PC-3 (cell line): ENCODE measurements at regions of chr14 and their contacts with region 1.

Region 1: GRCh38 chr14:21437063-21437901 is 18.6 kb downstream of the CHD8 start:
- DNase-seq: peak; percentile 99
- ATAC-seq: peak; percentile 99
- H3K4me3 ChIP-seq: peak overlapping the region; percentile 85
- H3K27ac ChIP-seq: peak overlapping the region; percentile 45
- H3K4me1 ChIP-seq: peaks cover 15% of the 10 kb centered on the region
- H3K27me3 ChIP-seq: no peaks in the 10 kb centered on the region
- CTCF ChIP-seq: no peak

Region 2: GRCh38 chr14:21455911-21456667 is 18.8 kb after region 1 on chr14 and contains the start of gene CHD8:
- CTCF ChIA-PET with region 1: interaction called, 17 read pairs
- POLR2A ChIA-PET with region 1: interaction called, 16 read pairs
- intact Hi-C with region 1: loop called (anchors 1 kb)
- DNase-seq: peak; percentile 99
- ATAC-seq: peak; percentile 98
- H3K4me3 ChIP-seq: peak within 1 kb of the TSS; percentile 97
- H3K27ac ChIP-seq: peak within 1 kb of the TSS; percentile 81
- H3K4me1 ChIP-seq: peaks cover 12% of the 10 kb centered on the region
- H3K27me3 ChIP-seq: no peaks in the 10 kb centered on the region
- CTCF ChIP-seq: peak; percentile 81
- total RNA-seq, gene CHD8: 57.4 and 81.0 TPM in 2 replicates

Region 3: DNA sequence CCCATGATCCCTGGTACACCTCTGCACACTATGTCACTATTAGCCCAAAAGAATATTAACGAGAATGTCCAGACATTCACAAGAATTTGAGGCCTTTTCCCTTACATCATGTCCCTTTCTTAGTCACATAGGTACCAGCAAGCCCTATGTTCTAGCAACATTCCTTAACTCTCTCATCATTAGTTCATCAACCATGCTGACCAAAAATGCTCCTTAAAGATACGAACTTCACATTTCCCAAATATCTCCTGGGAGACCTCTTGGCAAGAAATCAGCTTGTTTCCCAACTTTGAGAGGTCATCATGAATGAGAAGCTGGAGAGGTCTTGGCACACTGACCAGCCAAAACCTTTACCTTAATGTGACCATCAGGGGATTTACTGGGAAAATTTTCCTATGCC is 84.2 kb after region 1 on chr14:
- CTCF ChIA-PET with region 1: no interaction called
- POLR2A ChIA-PET with region 1: no interaction called
- intact Hi-C with region 1: no loop called
- DNase-seq: peak; percentile 48
- ATAC-seq: no peak
- H3K4me3 ChIP-seq: no peak overlapping the region
- H3K27ac ChIP-seq: no peak overlapping the region
- H3K4me1 ChIP-seq: no peaks in the 10 kb centered on the region; the same call in 1 of the 2 replicates
- H3K27me3 ChIP-seq: no peaks in the 10 kb centered on the region
- CTCF ChIP-seq: no peak